ENCODE measurements at regions of chr1 and their contacts with region 1.

Region 1: GRCh38 chr1:42747125-42747524 is 7.1 kb upstream of the CLDN19 start:
- DNase-seq: peak in 1 of 2 experiments; percentile 86
- H3K4me3 ChIP-seq: no peak overlapping the region
- H3K27ac ChIP-seq: no peak overlapping the region
- H3K4me1 ChIP-seq: peaks cover 0 to 2% (median 0%) of the 10 kb centered on the region in 4 experiments; a peak in 1 of 7 replicates
- H3K27me3 ChIP-seq: no peaks in the 10 kb centered on the region
- CTCF ChIP-seq: peak; percentile 81 to 88 (median 86)
- EP300 ChIP-seq: no peak
- POLR2A ChIP-seq: no peak
- RAD21 ChIP-seq: peak; percentile 88 to 91

Region 2: GRCh38 chr1:42756956-42757891 is 10.1 kb after region 1 on chr1:
- CTCF ChIA-PET with region 1: interaction called, 77 read pairs
- POLR2A ChIA-PET with region 1: interaction called, 3 read pairs
- DNase-seq: no peak
- H3K4me3 ChIP-seq: no peak overlapping the region
- H3K27ac ChIP-seq: no peak overlapping the region
- H3K4me1 ChIP-seq: no peaks in the 10 kb centered on the region
- H3K27me3 ChIP-seq: no peaks in the 10 kb centered on the region
- CTCF ChIP-seq: peak; percentile 34 to 75 (median 57)
- EP300 ChIP-seq: no peak
- POLR2A ChIP-seq: no peak
- RAD21 ChIP-seq: peak; percentile 51 to 61